Activated CD4-positive, alpha-beta memory T cell treated with anti-CD3 and anti-CD28 coated beads for 36 hours (primary cell): ENCODE measurements at regions of chr1 and their contacts with region 1.

Region 1: DNA sequence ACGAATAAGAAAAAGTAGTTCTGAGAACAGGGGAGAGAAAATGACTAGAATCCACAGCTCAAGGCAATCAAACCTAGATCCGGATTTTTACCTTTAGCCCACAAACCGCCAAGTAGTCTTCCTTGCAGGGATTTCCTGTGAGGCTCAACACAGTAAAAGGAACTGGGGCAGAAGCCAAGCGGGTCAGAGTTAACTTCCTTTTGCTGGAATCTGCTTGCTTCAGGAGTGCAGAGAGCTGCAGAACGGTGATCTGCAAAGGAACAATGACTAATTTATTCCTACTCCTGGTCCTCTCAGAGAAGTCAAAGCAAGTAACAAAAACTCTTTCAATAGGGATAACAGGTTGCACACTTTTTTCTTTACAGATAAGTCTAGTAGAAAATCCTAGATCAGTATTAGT is 53.4 kb downstream of the UBR4 start:
- DNase-seq: no peak
- H3K4me3 Mint-ChIP-seq: no peak overlapping the region
- H3K27ac Mint-ChIP-seq: no peak overlapping the region
- H3K4me1 Mint-ChIP-seq: no peaks in the 10 kb centered on the region
- H3K27me3 Mint-ChIP-seq: no peaks in the 10 kb centered on the region

Region 2: DNA sequence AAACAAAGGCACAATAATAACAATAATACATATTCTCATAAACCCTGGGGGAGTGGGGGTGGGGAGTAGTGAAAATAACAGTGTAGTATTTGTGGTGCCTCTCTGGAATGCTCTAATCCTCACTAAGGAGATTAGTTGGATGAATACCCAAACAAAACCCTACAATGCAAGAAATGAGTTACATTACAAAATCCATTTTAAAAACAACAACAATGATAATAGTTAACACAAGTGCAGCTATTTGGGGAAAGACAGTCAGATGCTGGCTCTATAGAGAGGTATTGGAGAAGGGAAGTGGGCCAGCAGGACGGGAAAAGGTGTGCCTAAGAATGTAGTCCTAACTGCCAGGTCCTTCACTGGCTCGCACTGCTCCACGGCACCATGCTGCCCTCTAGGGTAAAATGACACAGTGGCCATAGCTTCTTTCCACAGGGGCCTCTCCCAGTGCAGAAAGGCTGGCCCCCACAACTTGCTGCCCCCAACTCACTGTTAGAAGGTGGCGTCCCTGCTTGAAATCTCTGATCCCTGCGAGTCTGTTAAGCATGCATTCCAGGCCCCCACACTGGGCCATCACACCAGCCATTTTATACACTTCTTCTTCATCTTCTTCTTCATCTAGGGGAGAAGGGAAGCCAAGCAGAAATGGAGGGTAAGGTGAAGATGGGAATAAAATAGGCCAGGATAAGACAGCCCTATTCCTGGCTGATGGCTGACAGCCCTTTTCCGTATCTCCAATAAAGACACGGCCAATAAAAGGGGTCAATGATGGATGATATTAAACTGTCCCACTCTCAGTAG is 60.4 kb before region 1 on chr1:
- CTCF ChIA-PET with region 1: no interaction called
- POLR2A ChIA-PET with region 1: no interaction called
- intact Hi-C with region 1: loop called (anchors 10 kb)
- DNase-seq: peak; percentile 39
- H3K4me3 Mint-ChIP-seq: no peak overlapping the region
- H3K27ac Mint-ChIP-seq: no peak overlapping the region
- H3K4me1 Mint-ChIP-seq: no peaks in the 10 kb centered on the region
- H3K27me3 Mint-ChIP-seq: no peaks in the 10 kb centered on the region

Region 3: DNA sequence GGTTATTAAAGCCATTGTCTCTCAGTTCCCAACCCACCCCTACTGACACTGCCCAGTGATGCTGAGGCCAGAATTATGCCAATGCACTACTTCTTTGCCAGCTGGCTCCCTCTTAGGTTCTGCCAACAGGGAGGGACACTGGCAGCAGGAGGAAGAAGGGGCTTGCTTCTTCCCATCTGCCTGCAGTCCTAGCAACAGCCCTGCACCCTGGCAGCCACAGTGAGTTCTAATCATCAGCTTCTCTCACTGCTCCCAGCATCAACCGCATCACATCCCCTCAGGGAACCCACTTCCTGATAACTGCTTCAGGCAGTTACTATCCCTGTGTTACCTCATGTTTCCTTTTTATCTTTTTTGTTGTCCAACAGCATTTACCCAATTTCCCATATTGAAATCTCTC is 32.8 kb before region 1 on chr1:
- CTCF ChIA-PET with region 1: no interaction called
- POLR2A ChIA-PET with region 1: no interaction called
- intact Hi-C with region 1: no loop called
- DNase-seq: peak; percentile 17
- H3K4me3 Mint-ChIP-seq: no peak overlapping the region
- H3K27ac Mint-ChIP-seq: peak overlapping the region; percentile 35
- H3K4me1 Mint-ChIP-seq: peaks cover 26% of the 10 kb centered on the region
- H3K27me3 Mint-ChIP-seq: no peaks in the 10 kb centered on the region